ENCODE measurements at regions of chr11 and their contacts with region 1.

Region 1: GRCh38 chr11:66022401-66023185 is 3.7 kb downstream of the CATSPER1 start:
- DNase-seq: peak; percentile 73
- H3K27ac ChIP-seq: no peak overlapping the region
- CTCF ChIP-seq: peak; percentile 95

Region 2: GRCh38 chr11:65522640-65523322 is 499.8 kb before region 1 on chr11:
- CTCF ChIA-PET with region 1: no interaction called
- POLR2A ChIA-PET with region 1: no interaction called
- DNase-seq: no peak
- H3K27ac ChIP-seq: no peak overlapping the region
- CTCF ChIP-seq: no peak

Region 3: GRCh38 chr11:66001942-66002647 is 20.5 kb before region 1 on chr11 and contains the starts of genes BANF1 and EIF1AD:
- CTCF ChIA-PET with region 1: interaction called, 14 read pairs
- POLR2A ChIA-PET with region 1: interaction called, 4 read pairs
- DNase-seq: peak; percentile 89
- H3K27ac ChIP-seq: peak within 1 kb of the TSS; percentile 97
- CTCF ChIP-seq: no peak

Region 4: DNA sequence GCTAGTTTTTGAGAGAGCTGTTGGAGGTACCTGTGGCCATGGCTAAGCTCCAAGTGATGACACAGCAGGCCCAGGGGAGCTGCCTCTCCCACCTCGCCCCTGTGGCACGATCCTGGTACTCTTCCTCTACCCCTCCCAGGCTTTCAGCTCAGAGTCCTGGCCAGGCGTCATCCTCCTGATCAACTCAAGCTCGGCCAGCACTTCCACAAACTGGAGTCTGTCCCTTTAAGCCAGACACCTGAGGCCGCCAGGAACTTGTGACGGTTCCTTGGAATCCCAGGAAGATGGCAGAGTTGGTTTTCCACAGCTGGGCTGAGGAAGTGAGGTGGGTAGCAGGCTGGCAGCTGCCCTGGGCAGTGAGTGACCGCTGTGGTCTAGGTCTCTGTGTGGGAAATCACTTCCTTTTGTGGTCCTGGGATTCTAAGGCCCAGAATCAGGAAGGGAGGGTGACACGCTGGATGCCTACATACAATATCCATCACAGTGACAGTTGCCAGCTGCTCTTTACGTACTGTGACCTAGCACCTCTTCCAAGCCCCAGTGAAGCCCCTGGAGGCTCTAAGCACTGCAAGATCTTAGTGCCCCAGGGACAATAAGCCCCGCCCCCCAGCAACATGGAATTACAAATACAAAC is 14.0 kb before region 1 on chr11:
- CTCF ChIA-PET with region 1: interaction called, 14 read pairs
- POLR2A ChIA-PET with region 1: no interaction called
- DNase-seq: peak; percentile 48
- H3K27ac ChIP-seq: peak overlapping the region; percentile 63
- CTCF ChIP-seq: no peak

Region 5: GRCh38 chr11:66045177-66045639 is 22.6 kb after region 1 on chr11:
- CTCF ChIA-PET with region 1: interaction called, 11 read pairs
- POLR2A ChIA-PET with region 1: no interaction called
- DNase-seq: peak; percentile 78
- H3K27ac ChIP-seq: no peak overlapping the region
- CTCF ChIP-seq: peak; percentile 88

Region 6: DNA sequence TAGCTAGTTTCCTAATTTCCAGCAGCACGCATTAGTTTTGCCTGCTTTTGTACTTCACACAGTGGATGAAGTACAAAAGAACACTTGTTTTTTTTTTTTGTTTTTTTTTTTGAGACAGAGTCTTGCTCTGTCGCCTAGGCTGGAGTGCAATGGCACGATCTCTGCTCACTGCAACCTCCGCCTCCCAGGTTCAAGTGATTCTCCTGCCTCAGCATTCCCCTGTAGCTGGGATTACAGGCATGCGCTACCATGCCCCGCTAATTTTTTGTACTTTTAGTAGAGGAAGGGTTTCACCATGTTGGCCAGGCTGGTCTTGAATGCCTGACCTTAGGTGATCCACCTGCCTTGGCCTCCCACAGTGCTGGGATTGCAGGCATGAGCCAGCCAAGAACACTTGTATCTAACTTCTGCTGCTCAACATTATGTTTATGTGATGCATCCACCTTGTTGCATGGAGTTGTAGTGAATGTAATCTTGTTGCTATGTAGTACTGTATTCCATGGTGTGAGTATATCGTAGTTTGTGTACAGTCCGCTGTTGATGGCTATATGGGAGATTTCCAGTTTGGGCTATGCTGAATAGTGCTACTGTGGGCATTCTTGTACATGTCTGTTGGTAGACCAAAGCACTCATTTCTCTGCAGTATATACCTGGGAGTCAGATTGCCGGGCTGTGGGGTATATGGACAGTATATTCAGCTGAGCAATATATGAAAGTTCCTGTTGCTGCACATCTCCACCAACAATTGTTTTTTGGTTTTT is 64.7 kb after region 1 on chr11:
- CTCF ChIA-PET with region 1: no interaction called
- POLR2A ChIA-PET with region 1: no interaction called
- DNase-seq: no peak
- H3K27ac ChIP-seq: no peak overlapping the region
- CTCF ChIP-seq: no peak